ENCODE measurements at regions of chr20 and their contacts with region 1.

Region 1: DNA sequence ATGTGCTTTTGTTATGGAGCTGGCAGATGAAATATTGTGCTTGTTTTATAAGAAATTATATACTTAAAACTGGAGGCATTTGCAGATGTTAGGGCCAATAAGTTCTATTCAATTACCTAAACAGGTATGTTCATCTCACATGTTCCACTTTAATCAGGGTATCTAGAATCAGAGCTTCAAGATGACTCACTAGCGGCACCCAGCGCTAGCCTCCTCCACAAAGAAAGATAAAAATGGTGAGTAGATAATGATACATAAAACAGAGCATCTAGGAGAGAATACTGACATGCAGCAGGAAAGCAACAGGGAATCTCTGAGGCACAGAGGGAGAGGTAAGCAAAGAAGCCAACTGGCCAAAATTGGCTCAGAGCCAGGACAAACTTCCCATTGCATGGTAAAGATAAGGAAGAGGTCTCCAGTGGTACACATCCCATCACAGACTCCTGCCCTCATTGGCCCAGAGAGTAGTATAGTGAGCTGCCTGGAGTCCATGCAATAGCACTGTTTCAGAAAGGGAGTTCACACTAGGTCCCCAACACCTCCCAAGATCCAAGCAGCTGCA is 200.7 kb upstream of the SPTLC3 start:
- DNase-seq: peak; percentile 19
- ATAC-seq: peak; percentile 61
- H3K4me3 ChIP-seq: no peak overlapping the region
- H3K27ac ChIP-seq: no peak overlapping the region
- H3K4me1 ChIP-seq: no peaks in the 10 kb centered on the region
- H3K27me3 ChIP-seq: no peaks in the 10 kb centered on the region; a peak in 1 of 5 replicates
- CTCF ChIP-seq: peak; percentile 40
- EP300 ChIP-seq: no peak
- POLR2A ChIP-seq: no peak
- RAD21 ChIP-seq: no peak

Region 2: DNA sequence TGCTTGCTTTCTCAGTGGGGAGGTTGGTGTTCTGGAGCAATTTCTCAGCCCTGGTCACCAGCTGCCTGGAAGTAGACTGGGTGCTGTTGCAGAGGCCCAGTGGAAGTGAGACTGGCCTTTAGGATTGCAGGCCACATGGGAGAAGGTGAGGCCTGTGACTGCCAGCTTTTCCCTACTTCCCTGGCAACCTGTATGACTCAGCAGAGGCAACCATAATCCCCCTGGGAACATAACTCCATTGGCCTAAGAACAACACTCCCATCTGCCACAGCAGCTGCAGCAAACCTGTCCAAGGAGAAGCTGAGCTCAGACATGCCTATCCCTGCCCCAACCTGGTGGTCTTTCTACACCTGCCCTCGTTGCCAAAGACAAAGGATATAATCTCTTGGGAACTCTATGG is 272.8 kb before region 1 on chr20:
- CTCF ChIA-PET with region 1: no interaction called
- POLR2A ChIA-PET with region 1: no interaction called
- in situ Hi-C with region 1: no loop called
- intact Hi-C with region 1: no loop called
- DNase-seq: no peak
- ATAC-seq: no peak
- H3K4me3 ChIP-seq: no peak overlapping the region
- H3K27ac ChIP-seq: no peak overlapping the region
- H3K4me1 ChIP-seq: no peaks in the 10 kb centered on the region
- H3K27me3 ChIP-seq: no peaks in the 10 kb centered on the region
- CTCF ChIP-seq: no peak
- EP300 ChIP-seq: no peak
- POLR2A ChIP-seq: no peak
- RAD21 ChIP-seq: no peak

Region 3: GRCh38 chr20:12570371-12570770 is 237.7 kb before region 1 on chr20:
- CTCF ChIA-PET with region 1: no interaction called
- POLR2A ChIA-PET with region 1: no interaction called
- in situ Hi-C with region 1: no loop called
- intact Hi-C with region 1: loop called (anchors 5 kb)
- DNase-seq: peak; percentile 76
- ATAC-seq: peak; percentile 100
- H3K4me3 ChIP-seq: no peak overlapping the region
- H3K27ac ChIP-seq: no peak overlapping the region
- H3K4me1 ChIP-seq: no peaks in the 10 kb centered on the region
- H3K27me3 ChIP-seq: no peaks in the 10 kb centered on the region
- CTCF ChIP-seq: peak; percentile 77
- EP300 ChIP-seq: no peak
- POLR2A ChIP-seq: no peak
- RAD21 ChIP-seq: peak; percentile 38; the same call in 1 of the 2 replicates

Region 4: DNA sequence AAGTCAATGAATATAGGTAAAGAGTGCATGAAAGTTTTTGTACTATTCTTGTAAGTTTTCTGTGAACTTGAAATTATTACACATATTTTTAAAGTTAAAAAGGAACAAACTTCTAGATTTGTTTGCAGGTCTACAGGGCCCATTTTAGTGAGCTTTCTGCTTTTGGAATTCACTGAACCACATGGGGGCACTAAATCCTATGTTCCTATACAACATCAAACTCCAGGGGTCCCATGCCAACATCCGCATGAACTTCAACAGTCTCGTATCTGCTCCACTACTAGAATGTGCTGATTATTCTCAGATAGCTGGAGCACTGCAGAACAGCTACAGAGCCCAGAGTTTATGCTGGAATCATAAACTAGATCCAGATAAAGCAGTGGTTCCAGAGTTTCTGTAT is 147.2 kb before region 1 on chr20:
- CTCF ChIA-PET with region 1: no interaction called
- POLR2A ChIA-PET with region 1: no interaction called
- in situ Hi-C with region 1: no loop called
- intact Hi-C with region 1: loop called (anchors 5 kb)
- DNase-seq: peak; percentile 13
- ATAC-seq: peak; percentile 59; the same call in 2 of the 3 replicates
- H3K4me3 ChIP-seq: no peak overlapping the region
- H3K27ac ChIP-seq: no peak overlapping the region
- H3K4me1 ChIP-seq: no peaks in the 10 kb centered on the region
- H3K27me3 ChIP-seq: no peaks in the 10 kb centered on the region
- CTCF ChIP-seq: no peak; the same call in 1 of the 2 replicates
- EP300 ChIP-seq: no peak
- POLR2A ChIP-seq: no peak
- RAD21 ChIP-seq: no peak